Activated T-helper 1 cell treated with anti-CD3 and anti-CD28 coated beads, Interleukin-12 subunit alpha, Interleukin-12 subunit beta, Interleukin-2, Interleukin-4 antibody, amounts not matched to agents 30 ng/mL and 10 ng/mL and 1 ng/mL, durations not matched to agents 14 hours and 24 hours and 36 hours (primary cell): ENCODE measurements at regions of chr12 and their contacts with region 1.

Region 1: GRCh38 chr12:65602610-65603295 is 221.5 kb upstream of the HMGA2 start:
- DNase-seq: peak; percentile 1
- H3K4me3 Mint-ChIP-seq: no peak overlapping the region
- H3K27ac Mint-ChIP-seq: no peak overlapping the region
- H3K4me1 Mint-ChIP-seq: peaks cover 8% of the 10 kb centered on the region
- H3K27me3 Mint-ChIP-seq: peaks cover 11% of the 10 kb centered on the region

Region 2: GRCh38 chr12:65673732-65674131 is 71.0 kb after region 1 on chr12:
- intact Hi-C with region 1: loop called (anchors 5 kb)
- DNase-seq: no peak
- H3K4me3 Mint-ChIP-seq: no peak overlapping the region
- H3K27ac Mint-ChIP-seq: no peak overlapping the region
- H3K4me1 Mint-ChIP-seq: no peaks in the 10 kb centered on the region
- H3K27me3 Mint-ChIP-seq: peaks cover 2% of the 10 kb centered on the region

Region 3: DNA sequence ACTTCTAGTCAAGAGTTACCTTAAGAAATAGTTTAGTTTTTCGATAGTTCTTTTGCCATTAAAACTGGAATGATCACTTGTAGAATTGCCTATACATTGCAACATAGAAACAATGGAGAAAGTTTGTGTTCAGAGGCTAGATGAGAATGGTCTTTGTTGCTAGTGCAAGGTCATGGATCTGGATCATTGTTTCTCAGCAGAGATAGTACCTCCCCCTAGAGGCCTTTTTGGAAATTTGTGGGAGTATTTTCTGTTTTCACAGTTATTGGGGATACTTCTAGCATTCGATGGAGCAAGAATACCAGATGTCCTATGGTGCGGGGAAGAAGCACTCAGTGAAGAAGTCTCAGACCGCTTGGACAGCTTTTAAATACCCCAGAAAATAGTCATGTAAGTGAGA is 82.8 kb after region 1 on chr12:
- intact Hi-C with region 1: loop called (anchors 1 kb)
- DNase-seq: no peak
- H3K4me3 Mint-ChIP-seq: no peak overlapping the region
- H3K27ac Mint-ChIP-seq: no peak overlapping the region
- H3K4me1 Mint-ChIP-seq: no peaks in the 10 kb centered on the region
- H3K27me3 Mint-ChIP-seq: no peaks in the 10 kb centered on the region

Region 4: GRCh38 chr12:66087365-66087943 is 484.7 kb after region 1 on chr12:
- intact Hi-C with region 1: loop called (anchors 1 kb)
- DNase-seq: peak; percentile 22
- H3K4me3 Mint-ChIP-seq: no peak overlapping the region
- H3K27ac Mint-ChIP-seq: no peak overlapping the region
- H3K4me1 Mint-ChIP-seq: no peaks in the 10 kb centered on the region
- H3K27me3 Mint-ChIP-seq: peaks cover 25% of the 10 kb centered on the region